GM12878 (cell line): ENCODE measurements at regions of chr1 and their contacts with region 1.

Region 1: GRCh38 chr1:235011599-235012435 is 116.8 kb downstream of the TOMM20 start:
- DNase-seq: peak; percentile 100
- ATAC-seq: peak; percentile 75
- H3K4me3 ChIP-seq: peak overlapping the region; percentile 46; the same call in 1 of the 2 replicates
- H3K27ac ChIP-seq: peak overlapping the region; percentile 99
- H3K4me1 ChIP-seq: peaks cover 86% of the 10 kb centered on the region
- H3K27me3 ChIP-seq: no peaks in the 10 kb centered on the region
- CTCF ChIP-seq: no peak
- EP300 ChIP-seq: peak; percentile 100
- POLR2A ChIP-seq: peak; percentile 81
- RAD21 ChIP-seq: peak; percentile 30

Region 2: GRCh38 chr1:234499119-234499942 is 512.5 kb before region 1 on chr1:
- CTCF ChIA-PET with region 1: interaction called, 3 read pairs
- POLR2A ChIA-PET with region 1: interaction called, 10 read pairs
- RAD21 ChIA-PET with region 1: interaction called, 6 read pairs
- SMC1A ChIA-PET with region 1: interaction called, 6 read pairs
- in situ Hi-C with region 1: no loop called
- intact Hi-C with region 1: loop called (anchors 1 kb)
- DNase-seq: no peak
- ATAC-seq: peak; percentile 77
- H3K4me3 ChIP-seq: peak overlapping the region; percentile 14
- H3K27ac ChIP-seq: peak overlapping the region; percentile 69
- H3K4me1 ChIP-seq: peaks cover 45% of the 10 kb centered on the region
- H3K27me3 ChIP-seq: no peaks in the 10 kb centered on the region
- CTCF ChIP-seq: peak; percentile 94 to 96 (median 95); a peak in 5 of 6 replicates
- EP300 ChIP-seq: no peak
- POLR2A ChIP-seq: no peak
- RAD21 ChIP-seq: peak; percentile 96

Region 3: GRCh38 chr1:234730770-234731568 is 280.8 kb before region 1 on chr1:
- CTCF ChIA-PET with region 1: no interaction called
- POLR2A ChIA-PET with region 1: interaction called, 3 read pairs
- RAD21 ChIA-PET with region 1: interaction called, 3 read pairs
- SMC1A ChIA-PET with region 1: interaction called, 3 read pairs
- in situ Hi-C with region 1: no loop called
- intact Hi-C with region 1: loop called (anchors 2 kb)
- DNase-seq: peak; percentile 68
- ATAC-seq: peak; percentile 80
- H3K4me3 ChIP-seq: peak overlapping the region; percentile 17; the same call in 1 of the 2 replicates
- H3K27ac ChIP-seq: peak overlapping the region; percentile 82
- H3K4me1 ChIP-seq: peaks cover 59% of the 10 kb centered on the region
- H3K27me3 ChIP-seq: no peaks in the 10 kb centered on the region
- CTCF ChIP-seq: peak; percentile 17 to 30 (median 28); a peak in 3 of 6 replicates
- EP300 ChIP-seq: peak; percentile 53 to 57; a peak in 3 of 4 replicates
- POLR2A ChIP-seq: no peak
- RAD21 ChIP-seq: peak; percentile 46; the same call in 1 of the 2 replicates

Region 4: DNA sequence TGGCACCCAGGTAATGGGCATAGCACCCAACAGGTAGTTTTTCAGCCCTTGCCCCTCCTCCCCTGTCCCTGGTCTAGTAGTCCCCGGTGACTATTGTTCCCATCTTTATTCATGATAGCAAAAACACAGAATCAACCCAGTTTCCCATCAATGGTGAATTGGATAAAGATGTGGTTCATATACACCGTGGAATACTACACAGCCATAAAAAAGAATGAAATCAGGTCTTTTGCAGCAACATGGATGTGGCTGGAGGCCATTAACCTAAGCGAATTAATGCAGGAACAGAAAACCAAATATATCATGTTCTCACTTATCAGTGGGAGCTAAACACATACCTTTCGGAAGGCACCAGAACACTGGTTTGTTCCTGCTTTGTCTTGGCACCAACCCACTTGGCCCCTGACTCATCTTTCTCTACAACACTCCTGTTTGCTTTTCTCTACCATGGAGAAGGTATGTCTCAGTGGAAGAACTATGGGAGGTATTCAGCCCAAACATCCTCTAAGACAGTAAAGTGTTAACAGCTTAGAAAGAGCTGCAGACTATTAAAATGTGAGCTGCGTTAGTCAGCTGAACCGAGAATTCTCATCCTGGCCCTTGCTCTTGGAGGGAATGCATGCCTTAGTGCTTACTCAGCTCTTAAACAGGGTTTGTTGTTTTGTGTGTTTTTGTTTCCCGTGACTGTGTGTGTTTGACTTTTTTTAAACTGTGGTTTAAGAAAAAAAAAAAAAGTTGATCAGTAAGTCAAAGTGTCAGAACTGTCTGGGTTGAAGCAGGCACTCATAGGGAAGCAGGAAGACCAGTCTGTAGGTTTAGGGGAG is 86.2 kb before region 1 on chr1:
- CTCF ChIA-PET with region 1: no interaction called
- POLR2A ChIA-PET with region 1: no interaction called
- RAD21 ChIA-PET with region 1: interaction called, 4 read pairs
- SMC1A ChIA-PET with region 1: interaction called, 12 read pairs
- in situ Hi-C with region 1: no loop called
- intact Hi-C with region 1: loop called (anchors 1 kb)
- DNase-seq: peak; percentile 40
- ATAC-seq: peak; percentile 1
- H3K4me3 ChIP-seq: peak overlapping the region; percentile 40; the same call in 1 of the 2 replicates
- H3K27ac ChIP-seq: peak overlapping the region; percentile 95
- H3K4me1 ChIP-seq: peaks cover 48% of the 10 kb centered on the region
- H3K27me3 ChIP-seq: no peaks in the 10 kb centered on the region
- CTCF ChIP-seq: no peak
- EP300 ChIP-seq: no peak; a peak in 1 of 4 replicates
- POLR2A ChIP-seq: no peak
- RAD21 ChIP-seq: no peak

Region 5: DNA sequence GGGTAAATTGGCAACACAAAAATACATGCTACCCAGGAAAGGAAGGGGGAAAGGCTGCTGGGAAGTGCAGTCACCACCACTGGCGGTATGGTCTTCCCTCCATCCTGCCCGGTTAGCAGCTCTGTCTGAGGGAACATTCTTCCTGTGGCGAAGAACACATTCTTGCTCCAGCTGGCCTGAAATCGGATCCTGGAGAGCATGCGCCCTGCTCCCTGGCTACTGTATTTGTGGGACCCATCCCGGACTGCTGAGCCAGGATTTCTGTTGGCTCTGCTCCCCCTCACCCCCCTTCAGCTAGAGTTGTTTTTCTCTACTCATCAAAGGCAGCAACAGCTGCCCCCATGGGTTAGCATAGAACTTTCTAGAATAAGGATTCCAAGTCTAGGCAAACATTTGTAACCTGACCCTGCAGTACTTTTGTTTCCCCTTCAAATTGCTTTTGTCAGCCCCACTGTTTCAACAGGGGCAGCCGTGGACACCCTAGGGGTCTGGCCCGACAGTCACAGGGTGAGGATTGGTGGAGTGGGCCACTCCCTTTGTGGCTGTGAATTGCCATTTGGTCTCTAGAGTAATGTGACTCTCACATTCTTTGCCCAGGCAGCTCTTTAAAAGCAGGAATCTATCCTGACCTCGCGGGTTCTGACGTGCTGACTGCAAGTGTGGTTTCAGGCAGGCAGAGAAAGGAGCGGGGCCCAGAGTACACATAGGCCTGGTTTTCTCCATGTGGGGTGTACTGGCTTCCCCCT is 40.9 kb before region 1 on chr1:
- CTCF ChIA-PET with region 1: interaction called, 7 read pairs
- POLR2A ChIA-PET with region 1: interaction called, 111 read pairs
- RAD21 ChIA-PET with region 1: interaction called, 257 read pairs
- SMC1A ChIA-PET with region 1: interaction called, 229 read pairs
- in situ Hi-C with region 1: loop called (anchors 5 kb)
- intact Hi-C with region 1: loop called (anchors 2 kb)
- DNase-seq: no peak
- ATAC-seq: peak; percentile 72
- H3K4me3 ChIP-seq: no peak overlapping the region
- H3K27ac ChIP-seq: peak overlapping the region; percentile 95
- H3K4me1 ChIP-seq: peaks cover 60% of the 10 kb centered on the region
- H3K27me3 ChIP-seq: no peaks in the 10 kb centered on the region
- CTCF ChIP-seq: no peak
- EP300 ChIP-seq: peak in 1 of 2 experiments; percentile 87; a peak in 2 of 4 replicates
- POLR2A ChIP-seq: peak; percentile 31; the same call in 1 of the 2 replicates
- RAD21 ChIP-seq: 0 out of 2 replicates have a peak, but pooled peaks have one; percentile 4

Region 6: DNA sequence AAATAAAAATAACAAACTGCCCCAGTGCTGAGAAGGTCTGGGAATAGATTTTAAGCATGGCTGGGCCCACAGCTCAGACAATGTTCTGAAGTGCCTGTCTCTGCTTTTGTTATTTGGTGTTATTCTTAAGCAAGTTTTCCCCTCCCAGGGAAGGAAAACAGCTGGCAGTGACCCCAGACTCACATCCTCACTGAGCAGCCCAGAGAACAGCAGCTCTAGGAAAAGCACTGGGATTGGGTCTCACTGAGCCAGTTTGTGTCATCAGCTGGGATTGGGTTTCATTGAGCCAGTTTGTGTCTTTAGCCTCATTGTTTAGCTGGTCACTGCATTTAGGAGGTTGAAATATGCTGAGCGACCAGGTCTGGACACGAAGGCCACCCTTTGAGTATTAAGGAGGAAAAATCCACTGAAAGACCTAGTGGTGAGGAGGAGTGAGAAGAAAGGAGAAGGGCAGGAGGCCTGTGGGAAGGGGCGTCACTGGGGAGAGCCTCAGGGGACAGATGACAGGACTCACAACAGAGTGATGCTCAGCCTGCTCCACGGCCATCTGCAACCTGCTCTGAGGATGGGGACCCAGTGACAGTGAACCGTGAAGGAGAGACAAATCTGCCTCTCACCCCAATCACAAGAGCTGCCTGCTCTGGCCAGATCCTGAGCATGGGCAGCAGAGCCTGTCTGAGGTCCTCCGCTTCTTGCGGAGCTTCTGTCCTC is 13.0 kb after region 1 on chr1:
- CTCF ChIA-PET with region 1: interaction called, 6 read pairs
- POLR2A ChIA-PET with region 1: interaction called, 10 read pairs
- RAD21 ChIA-PET with region 1: interaction called, 15 read pairs
- SMC1A ChIA-PET with region 1: interaction called, 125 read pairs
- in situ Hi-C with region 1: no loop called
- intact Hi-C with region 1: no loop called
- DNase-seq: no peak
- ATAC-seq: peak; percentile 23
- H3K4me3 ChIP-seq: no peak overlapping the region
- H3K27ac ChIP-seq: peak overlapping the region; percentile 75
- H3K4me1 ChIP-seq: peaks cover 37% of the 10 kb centered on the region
- H3K27me3 ChIP-seq: no peaks in the 10 kb centered on the region
- CTCF ChIP-seq: no peak
- EP300 ChIP-seq: no peak
- POLR2A ChIP-seq: no peak
- RAD21 ChIP-seq: no peak

Region 7: DNA sequence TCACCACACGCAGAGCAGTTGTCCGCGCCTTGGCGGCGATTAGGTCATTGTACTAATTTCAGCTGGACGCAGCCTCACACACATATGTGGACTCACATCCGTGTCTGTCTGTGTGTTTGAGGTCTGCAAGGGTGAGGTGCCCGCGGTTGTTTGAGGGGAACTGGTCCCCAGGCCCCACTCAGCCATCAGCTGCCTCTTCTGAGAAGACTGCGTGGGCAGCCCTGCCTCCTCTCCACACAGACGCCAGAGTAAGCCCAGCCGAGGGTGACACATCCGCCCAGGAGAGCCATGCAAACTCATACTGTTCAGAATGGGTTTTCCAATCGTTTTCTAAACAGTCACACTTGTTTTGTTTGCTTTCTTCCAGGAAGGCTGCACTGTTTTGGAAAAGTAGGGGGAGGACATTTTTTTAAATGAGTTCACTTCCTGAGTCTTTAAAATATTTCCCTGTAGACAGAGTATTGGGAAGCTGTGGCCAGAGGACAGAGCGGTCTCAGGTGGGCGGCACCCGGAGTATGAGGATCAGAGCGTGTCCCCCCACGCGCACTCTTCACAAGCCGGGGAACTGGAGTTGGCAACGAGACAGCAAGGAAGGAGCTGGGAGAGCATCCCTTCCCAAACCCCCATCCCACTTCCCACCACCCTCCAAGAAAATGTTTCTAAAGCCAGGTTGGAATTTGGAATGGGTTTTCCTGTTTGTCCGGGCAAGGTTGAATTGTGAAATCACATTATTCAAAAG is 63.5 kb after region 1 on chr1:
- CTCF ChIA-PET with region 1: interaction called, 4 read pairs
- POLR2A ChIA-PET with region 1: interaction called, 17 read pairs
- RAD21 ChIA-PET with region 1: interaction called, 38 read pairs
- SMC1A ChIA-PET with region 1: interaction called, 47 read pairs
- in situ Hi-C with region 1: no loop called
- intact Hi-C with region 1: loop called (anchors 1 kb)
- DNase-seq: peak; percentile 98
- ATAC-seq: peak; percentile 77
- H3K4me3 ChIP-seq: peak overlapping the region; percentile 37
- H3K27ac ChIP-seq: peak overlapping the region; percentile 99
- H3K4me1 ChIP-seq: peaks cover 70% of the 10 kb centered on the region
- H3K27me3 ChIP-seq: no peaks in the 10 kb centered on the region
- CTCF ChIP-seq: no peak
- EP300 ChIP-seq: peak; percentile 99 to 100; a peak in 3 of 4 replicates
- POLR2A ChIP-seq: peak; percentile 74
- RAD21 ChIP-seq: no peak

Region 8: DNA sequence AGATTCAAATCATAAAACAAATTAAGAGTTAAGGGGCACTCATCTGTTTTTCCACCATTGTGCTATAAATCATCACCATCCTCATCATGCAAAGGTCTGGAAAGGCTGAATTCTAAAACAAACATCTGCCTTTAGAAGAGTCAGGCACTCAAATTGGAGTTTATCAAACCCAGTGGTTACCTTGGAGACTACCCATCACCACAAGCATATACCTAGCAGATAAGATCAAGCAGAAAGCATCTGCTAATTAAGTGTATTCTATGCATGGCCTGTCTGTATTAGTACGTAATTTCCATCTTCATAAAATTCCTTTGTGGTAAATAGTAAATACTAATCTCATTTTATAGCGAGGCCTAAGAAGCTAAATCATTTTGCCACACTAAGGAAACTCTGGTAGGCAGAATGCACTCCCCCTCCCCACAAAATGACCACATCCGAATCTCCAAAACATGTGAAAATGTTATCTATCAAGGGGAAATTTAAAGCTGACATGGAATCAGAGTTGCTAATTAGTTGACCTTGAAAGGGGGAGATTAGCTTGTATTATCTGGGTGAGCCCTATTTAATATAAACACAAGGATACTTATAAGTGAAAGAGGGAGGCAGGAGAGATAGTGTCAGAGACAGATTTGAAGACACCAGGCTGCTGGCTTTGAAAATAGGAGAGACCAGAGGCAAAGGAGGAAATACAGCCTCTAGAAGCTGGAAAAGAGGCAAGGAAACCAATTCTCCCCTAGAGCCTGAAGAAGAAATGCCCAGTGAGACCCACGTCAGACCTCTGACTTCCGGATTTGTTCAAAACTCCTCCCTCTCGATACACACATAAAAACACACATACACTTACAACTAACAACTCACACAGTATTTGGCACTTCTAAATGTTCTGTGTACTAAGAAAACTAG is 293.0 kb after region 1 on chr1:
- CTCF ChIA-PET with region 1: no interaction called
- POLR2A ChIA-PET with region 1: no interaction called
- RAD21 ChIA-PET with region 1: no interaction called
- SMC1A ChIA-PET with region 1: no interaction called
- in situ Hi-C with region 1: no loop called
- intact Hi-C with region 1: no loop called
- DNase-seq: no peak
- ATAC-seq: peak; percentile 68
- H3K4me3 ChIP-seq: no peak overlapping the region
- H3K27ac ChIP-seq: no peak overlapping the region
- H3K4me1 ChIP-seq: no peaks in the 10 kb centered on the region
- H3K27me3 ChIP-seq: no peaks in the 10 kb centered on the region
- CTCF ChIP-seq: no peak
- EP300 ChIP-seq: no peak
- POLR2A ChIP-seq: no peak
- RAD21 ChIP-seq: no peak